Activated T-helper 1 cell treated with anti-CD3 and anti-CD28 coated beads, Interleukin-12 subunit alpha, Interleukin-12 subunit beta, Interleukin-2, Interleukin-4 antibody, amounts not matched to agents 30 ng/mL and 10 ng/mL and 1 ng/mL, durations not matched to agents 14 hours and 24 hours and 36 hours (primary cell): ENCODE measurements at regions of chr4 and their contacts with region 1.

Region 1: DNA sequence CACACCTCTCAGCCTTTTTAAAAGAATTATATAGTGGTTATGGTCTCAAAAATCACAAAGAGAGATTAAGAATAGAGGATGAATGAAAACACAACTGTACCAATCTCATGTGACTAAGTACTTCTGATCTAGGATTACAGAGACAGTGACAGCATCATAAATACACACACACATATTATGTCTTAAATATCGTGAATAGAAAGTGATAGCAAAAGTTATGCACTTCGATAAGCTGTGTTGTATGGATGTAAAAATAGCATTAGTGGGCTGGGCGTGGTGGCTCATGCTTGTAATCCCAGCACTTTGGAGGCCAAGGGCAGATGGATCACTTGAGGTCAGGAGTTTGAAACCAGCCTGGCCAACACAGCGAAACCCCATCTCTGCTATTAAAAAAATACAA is 25.0 kb downstream of the GYPA start:
- DNase-seq: no peak
- H3K4me3 Mint-ChIP-seq: no peak overlapping the region
- H3K27ac Mint-ChIP-seq: no peak overlapping the region
- H3K4me1 Mint-ChIP-seq: no peaks in the 10 kb centered on the region
- H3K27me3 Mint-ChIP-seq: peaks cover 3% of the 10 kb centered on the region

Region 2: GRCh38 chr4:143882892-143883291 is 232.6 kb before region 1 on chr4:
- intact Hi-C with region 1: loop called (anchors 5 kb)
- DNase-seq: no peak
- H3K4me3 Mint-ChIP-seq: no peak overlapping the region
- H3K27ac Mint-ChIP-seq: no peak overlapping the region
- H3K4me1 Mint-ChIP-seq: no peaks in the 10 kb centered on the region
- H3K27me3 Mint-ChIP-seq: no peaks in the 10 kb centered on the region